MCF 10A (cell line): ENCODE measurements at regions of chr10 and their contacts with region 1.

Region 1: DNA sequence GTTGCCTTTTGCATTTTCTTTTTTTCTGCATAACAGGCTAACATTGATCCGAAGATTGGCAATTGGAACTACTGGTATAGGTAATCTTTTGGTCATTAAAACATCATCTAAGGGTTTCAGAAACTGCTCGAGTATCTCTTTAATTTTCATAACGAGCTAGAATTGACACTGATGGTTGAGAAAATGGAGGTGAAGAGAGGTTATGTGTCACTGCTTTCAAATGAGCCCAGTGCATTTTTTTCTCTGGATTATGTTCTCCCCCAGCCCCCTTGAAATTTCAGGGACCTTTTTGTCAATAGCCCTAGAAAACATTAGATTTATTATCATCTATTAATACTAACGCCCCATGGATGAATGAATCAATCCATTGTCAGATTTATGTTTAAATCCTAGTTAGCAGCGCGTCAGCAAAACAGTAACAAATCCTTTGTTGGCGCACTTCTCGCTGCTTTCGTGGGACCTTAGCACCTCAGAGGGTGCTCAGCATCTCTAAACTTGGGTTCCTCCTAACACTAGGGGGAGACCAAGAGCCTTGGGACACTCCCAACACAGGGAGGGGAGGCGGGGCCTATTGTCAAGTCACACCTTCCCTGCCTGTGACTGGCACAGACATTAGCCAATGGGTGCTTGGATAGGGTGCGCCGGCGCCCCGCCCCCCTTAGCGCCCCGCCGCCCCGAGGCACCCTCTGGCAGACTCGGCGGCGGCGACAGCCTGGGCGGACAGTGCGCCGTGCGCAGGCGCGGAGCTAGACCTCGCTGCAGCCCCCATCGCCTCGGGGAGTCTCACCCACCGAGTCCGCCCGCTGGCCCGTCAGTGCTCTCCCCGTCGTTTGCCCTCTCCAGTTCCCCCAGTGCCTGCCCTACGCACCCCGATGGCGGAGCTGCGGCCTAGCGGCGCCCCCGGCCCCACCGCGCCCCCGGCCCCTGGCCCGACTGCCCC is at the start of gene SUFU:
- DNase-seq: peak; percentile 100
- H3K4me3 Mint-ChIP-seq: no peak within 1 kb of the TSS
- H3K27ac Mint-ChIP-seq: peak within 1 kb of the TSS; percentile 65
- H3K4me1 Mint-ChIP-seq: peaks cover 16% of the 10 kb centered on the region
- H3K27me3 Mint-ChIP-seq: no peaks in the 10 kb centered on the region
- CTCF ChIP-seq: peak; percentile 75
- total RNA-seq, gene SUFU: 6.3 TPM in 2 replicates

Region 2: GRCh38 chr10:102461187-102462054 is 42.1 kb before region 1 on chr10:
- CTCF ChIA-PET with region 1: interaction called, 6 read pairs
- POLR2A ChIA-PET with region 1: interaction called, 20 read pairs
- intact Hi-C with region 1: loop called (anchors 2 kb)
- DNase-seq: peak; percentile 95
- H3K4me3 Mint-ChIP-seq: peak overlapping the region; percentile 92
- H3K27ac Mint-ChIP-seq: peak overlapping the region; percentile 63
- H3K4me1 Mint-ChIP-seq: peaks cover 15% of the 10 kb centered on the region
- H3K27me3 Mint-ChIP-seq: no peaks in the 10 kb centered on the region
- CTCF ChIP-seq: no peak

Region 3: DNA sequence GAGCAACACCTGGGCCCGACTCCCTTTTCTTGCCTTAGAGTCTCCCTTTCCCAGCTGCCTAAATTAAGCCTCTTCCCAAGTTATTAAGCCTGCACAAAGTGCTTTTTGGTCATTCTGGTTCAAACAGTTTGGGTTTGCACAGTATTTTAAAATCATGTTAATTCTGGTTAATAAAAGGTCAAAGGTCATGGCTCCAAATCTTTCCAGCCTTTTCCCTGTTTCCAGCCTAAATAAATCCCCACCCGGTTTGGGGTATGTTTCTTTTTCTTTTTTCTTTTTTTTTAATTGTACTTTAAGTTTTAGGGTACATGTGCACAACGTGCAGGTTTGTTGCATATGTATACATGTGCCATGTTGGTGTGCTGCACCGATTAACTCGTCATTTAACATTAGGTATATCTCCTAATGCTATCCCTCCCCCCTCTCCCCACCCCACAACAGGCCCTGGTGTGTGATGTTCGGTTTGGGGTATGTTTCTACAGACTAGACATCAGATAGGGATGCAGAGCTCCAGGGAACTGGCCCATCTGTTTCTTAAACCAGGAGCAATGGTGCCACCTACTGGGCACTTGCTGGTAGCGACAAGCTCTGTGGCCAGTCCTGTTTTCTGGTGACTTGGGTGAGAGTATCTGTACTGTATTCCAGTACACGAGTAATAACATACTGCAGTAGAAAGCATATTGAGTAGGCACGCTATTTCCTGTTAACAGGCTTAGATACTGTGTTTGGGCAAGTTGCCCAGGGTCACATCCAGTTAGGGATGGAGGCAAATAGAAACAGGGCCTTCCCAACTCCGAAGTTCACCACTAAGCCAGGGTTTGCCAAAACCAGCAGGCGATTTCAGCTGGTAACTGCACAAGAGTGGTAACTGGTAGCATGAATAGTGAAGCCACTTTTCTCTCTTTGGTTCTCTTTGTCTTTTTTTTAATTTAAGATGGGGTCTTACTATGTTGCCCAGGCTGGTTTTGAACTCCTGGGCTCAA is 80.2 kb after region 1 on chr10:
- CTCF ChIA-PET with region 1: interaction called, 69 read pairs
- POLR2A ChIA-PET with region 1: interaction called, 31 read pairs
- intact Hi-C with region 1: loop called (anchors 1 kb)
- DNase-seq: peak; percentile 87
- H3K4me3 Mint-ChIP-seq: no peak overlapping the region
- H3K27ac Mint-ChIP-seq: no peak overlapping the region
- H3K4me1 Mint-ChIP-seq: no peaks in the 10 kb centered on the region
- H3K27me3 Mint-ChIP-seq: no peaks in the 10 kb centered on the region
- CTCF ChIP-seq: peak; percentile 78

Region 4: GRCh38 chr10:102596506-102596971 is 93.0 kb after region 1 on chr10:
- CTCF ChIA-PET with region 1: interaction called, 11 read pairs
- POLR2A ChIA-PET with region 1: interaction called, 6 read pairs
- intact Hi-C with region 1: loop called (anchors 2 kb)
- DNase-seq: peak; percentile 66
- H3K4me3 Mint-ChIP-seq: no peak overlapping the region
- H3K27ac Mint-ChIP-seq: no peak overlapping the region
- H3K4me1 Mint-ChIP-seq: no peaks in the 10 kb centered on the region
- H3K27me3 Mint-ChIP-seq: no peaks in the 10 kb centered on the region
- CTCF ChIP-seq: peak; percentile 86

Region 5: DNA sequence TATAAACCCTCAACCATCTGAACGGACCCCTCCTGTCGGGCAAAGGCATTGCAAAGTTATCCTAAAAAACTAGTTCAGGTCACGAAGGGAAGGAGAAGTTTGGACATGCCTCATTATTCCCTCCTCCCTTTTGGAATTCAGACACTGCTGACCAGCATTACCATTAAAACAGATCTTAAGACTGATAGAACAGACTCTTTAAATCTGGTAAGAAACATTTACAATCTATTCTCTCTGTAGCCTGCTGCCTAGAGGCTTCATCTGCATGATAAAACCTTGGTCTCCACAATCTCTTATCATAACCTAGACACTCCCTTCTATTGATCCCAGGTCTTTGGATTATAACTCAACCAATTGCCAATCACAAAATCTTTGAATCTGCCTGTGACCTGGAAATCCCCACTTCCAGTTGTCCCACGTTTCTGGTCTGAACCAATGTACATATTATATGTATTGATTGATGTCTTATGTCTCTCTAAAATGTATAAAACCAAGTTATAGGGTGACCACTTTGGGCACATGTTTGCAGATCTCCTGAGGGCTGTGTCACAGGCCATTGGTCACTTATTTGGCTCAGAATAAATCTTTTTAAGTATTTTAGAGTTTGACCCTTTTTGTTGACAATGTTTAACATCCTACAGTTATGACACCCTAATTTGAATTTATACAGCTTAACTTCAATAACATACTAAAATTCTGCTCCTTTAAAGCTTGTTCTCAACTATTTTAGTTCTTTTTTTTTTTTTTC is 391.1 kb after region 1 on chr10:
- CTCF ChIA-PET with region 1: no interaction called
- POLR2A ChIA-PET with region 1: no interaction called
- intact Hi-C with region 1: no loop called
- DNase-seq: no peak
- H3K4me3 Mint-ChIP-seq: no peak overlapping the region
- H3K27ac Mint-ChIP-seq: no peak overlapping the region
- H3K4me1 Mint-ChIP-seq: no peaks in the 10 kb centered on the region
- H3K27me3 Mint-ChIP-seq: no peaks in the 10 kb centered on the region
- CTCF ChIP-seq: no peak